Cardiac septum (tissue), 1 donor: ENCODE measurements at regions of chr13 and their contacts with region 1.

Region 1: GRCh38 chr13:29771247-29771646 is 79.2 kb downstream of the UBL3 start:
- DNase-seq: no peak

Region 2: GRCh38 chr13:29830000-29830399 is 58.8 kb after region 1 on chr13:
- intact Hi-C with region 1: no loop called
- DNase-seq: no peak

Region 3: GRCh38 chr13:30114571-30115256 is 343.5 kb after region 1 on chr13:
- intact Hi-C with region 1: loop called (anchors 2 kb)
- DNase-seq: peak; percentile 94